Activated T-helper 1 cell treated with anti-CD3 and anti-CD28 coated beads, Interleukin-12 subunit alpha, Interleukin-12 subunit beta, Interleukin-2, Interleukin-4 antibody, amounts not matched to agents 30 ng/mL and 10 ng/mL and 1 ng/mL, durations not matched to agents 14 hours and 24 hours and 36 hours (primary cell): ENCODE measurements at regions of chr1 and their contacts with region 1.

Region 1: GRCh38 chr1:47444562-47445465 is 7.0 kb downstream of the FOXD2 start:
- DNase-seq: no peak
- H3K4me3 Mint-ChIP-seq: peak overlapping the region; percentile 62
- H3K27ac Mint-ChIP-seq: peak overlapping the region; percentile 80
- H3K4me1 Mint-ChIP-seq: peaks cover 14% of the 10 kb centered on the region
- H3K27me3 Mint-ChIP-seq: peaks cover 20% of the 10 kb centered on the region

Region 2: DNA sequence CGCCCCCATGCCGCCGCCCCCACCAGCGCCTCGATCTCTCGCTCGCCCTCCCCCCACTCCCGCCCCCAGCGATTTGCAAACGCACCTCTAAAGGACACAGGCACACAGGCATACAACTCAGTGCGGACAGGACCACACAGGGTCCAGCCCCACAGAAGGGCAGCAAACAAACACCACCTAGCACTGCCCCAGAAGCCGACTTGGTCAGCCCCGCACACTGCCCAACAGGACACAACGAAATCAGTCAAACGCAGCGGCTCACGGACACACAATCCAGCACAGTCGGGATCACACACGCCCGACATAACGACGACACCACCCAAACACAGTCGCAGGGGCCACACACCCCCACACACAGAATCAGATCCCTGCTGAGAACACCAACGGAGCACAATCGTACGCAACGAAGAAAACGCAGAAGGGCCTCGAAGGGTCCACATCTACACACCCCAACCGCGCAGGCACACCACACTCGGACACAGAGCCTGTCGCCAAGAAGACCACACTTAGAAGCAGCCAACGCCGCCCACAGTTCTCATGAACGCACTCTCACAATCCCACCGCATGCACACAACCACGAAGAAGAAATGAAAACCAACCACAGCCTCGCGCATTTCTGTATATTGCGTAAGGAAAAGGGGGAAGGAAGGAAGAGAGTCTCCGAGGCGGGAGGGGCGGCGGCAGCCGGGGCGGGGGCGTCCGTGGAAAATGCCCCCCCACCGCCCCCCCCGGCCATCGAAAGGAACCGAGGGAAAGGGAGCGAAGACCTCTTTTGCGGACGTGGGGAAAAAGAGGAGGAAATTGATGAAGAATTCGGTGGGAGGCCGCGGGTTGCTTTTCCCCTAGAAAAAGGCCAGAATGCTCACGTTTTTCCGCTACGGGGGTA is 213.3 kb before region 1 on chr1:
- intact Hi-C with region 1: loop called (anchors 1 kb)
- DNase-seq: no peak
- H3K4me3 Mint-ChIP-seq: peak overlapping the region; percentile 73
- H3K27ac Mint-ChIP-seq: peak overlapping the region; percentile 86
- H3K4me1 Mint-ChIP-seq: peaks cover 14% of the 10 kb centered on the region
- H3K27me3 Mint-ChIP-seq: peaks cover 87% of the 10 kb centered on the region

Region 3: DNA sequence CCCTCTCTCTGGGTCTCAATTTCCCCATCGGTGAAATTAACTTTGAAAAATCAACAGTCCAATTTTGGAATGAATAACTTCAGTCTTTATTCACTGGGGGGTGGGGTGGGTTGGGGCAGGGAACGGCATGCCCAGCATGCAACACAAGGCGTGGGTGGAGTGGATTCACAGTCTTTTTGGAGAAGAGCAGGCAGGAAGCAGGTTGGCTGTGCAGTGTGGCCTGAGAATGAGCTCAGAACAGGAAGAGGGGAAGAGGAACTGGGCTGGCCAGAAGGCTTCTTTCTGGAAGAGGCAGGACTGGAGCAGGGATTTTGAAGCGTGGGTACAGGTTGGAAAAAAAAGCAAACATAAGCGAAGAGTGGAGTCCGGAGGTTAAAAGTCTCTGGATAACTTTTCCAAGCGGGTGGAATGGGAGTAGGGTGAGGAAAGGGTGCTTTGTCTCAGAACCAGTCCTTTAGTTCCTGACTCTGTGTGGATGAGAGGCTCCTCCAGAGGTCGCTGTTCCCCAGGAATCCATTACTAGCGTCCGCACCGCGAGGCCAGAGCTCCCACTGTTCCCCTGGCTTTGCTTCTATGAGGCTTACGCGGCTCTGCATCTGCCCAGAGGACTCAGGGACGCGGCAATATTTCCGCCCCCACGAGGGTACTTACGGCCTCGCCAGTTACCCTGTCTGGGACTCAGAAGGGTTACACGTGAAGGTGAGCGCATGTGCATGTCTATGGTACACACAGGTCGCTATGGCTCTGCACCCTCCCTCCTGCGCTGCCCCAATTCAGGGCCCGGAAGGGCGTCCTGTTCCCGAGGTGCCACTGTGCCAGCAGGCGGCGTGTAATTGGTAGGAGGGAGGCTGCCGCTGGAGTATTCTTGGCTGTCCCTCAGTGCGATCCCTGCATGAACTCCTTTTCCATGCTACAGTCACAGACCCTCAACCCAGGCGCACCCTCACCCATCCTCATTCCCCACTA is 12.5 kb before region 1 on chr1:
- intact Hi-C with region 1: loop called (anchors 1 kb)
- DNase-seq: peak; percentile 28
- H3K4me3 Mint-ChIP-seq: no peak overlapping the region
- H3K27ac Mint-ChIP-seq: no peak overlapping the region
- H3K4me1 Mint-ChIP-seq: peaks cover 34% of the 10 kb centered on the region
- H3K27me3 Mint-ChIP-seq: peaks cover 36% of the 10 kb centered on the region

Region 4: GRCh38 chr1:47507881-47508701 is 63.3 kb after region 1 on chr1:
- intact Hi-C with region 1: loop called (anchors 2 kb)
- DNase-seq: no peak
- H3K4me3 Mint-ChIP-seq: no peak overlapping the region
- H3K27ac Mint-ChIP-seq: no peak overlapping the region
- H3K4me1 Mint-ChIP-seq: no peaks in the 10 kb centered on the region
- H3K27me3 Mint-ChIP-seq: peaks cover 54% of the 10 kb centered on the region